GM13977 (cell line): ENCODE measurements at regions of chr5 and their contacts with region 1.

Region 1: GRCh38 chr5:133287500-133287899 is 235.7 kb downstream of the HSPA4 start:
- DNase-seq: peak; percentile 60
- CTCF ChIP-seq: peak; percentile 70

Region 2: DNA sequence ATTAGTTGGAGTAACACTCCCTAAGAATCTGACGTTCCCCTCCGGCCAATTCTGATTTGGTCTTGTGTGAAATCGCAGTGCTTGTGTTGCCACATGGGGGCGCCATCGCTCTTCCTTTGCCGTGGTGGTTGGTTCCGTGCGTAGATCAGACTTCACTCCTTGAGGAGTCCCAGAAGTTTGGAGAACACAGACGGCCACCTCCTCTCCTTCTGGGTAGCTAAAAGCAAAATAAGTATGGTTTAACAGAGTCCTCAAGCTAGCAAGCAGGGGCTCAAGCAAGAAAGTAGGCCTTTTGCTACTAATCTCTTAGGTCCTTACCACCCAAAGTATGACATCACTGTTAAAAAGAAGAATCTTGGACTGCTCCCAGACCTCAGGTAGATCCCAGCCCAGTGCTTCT is 176.2 kb before region 1 on chr5:
- in situ Hi-C with region 1: loop called (anchors 25 kb)
- DNase-seq: peak; percentile 80
- CTCF ChIP-seq: peak; percentile 96

Region 3: GRCh38 chr5:133154274-133155074 is 133.0 kb before region 1 on chr5:
- in situ Hi-C with region 1: no loop called
- DNase-seq: no peak
- CTCF ChIP-seq: no peak

Region 4: GRCh38 chr5:133164759-133165158 is 122.7 kb before region 1 on chr5:
- in situ Hi-C with region 1: no loop called
- DNase-seq: no peak
- CTCF ChIP-seq: no peak

Region 5: GRCh38 chr5:134493461-134494055 is 1206.1 kb after region 1 on chr5:
- in situ Hi-C with region 1: no loop called
- DNase-seq: no peak
- CTCF ChIP-seq: no peak